ENCODE measurements at regions of chr6 and their contacts with region 1.

Region 1: DNA sequence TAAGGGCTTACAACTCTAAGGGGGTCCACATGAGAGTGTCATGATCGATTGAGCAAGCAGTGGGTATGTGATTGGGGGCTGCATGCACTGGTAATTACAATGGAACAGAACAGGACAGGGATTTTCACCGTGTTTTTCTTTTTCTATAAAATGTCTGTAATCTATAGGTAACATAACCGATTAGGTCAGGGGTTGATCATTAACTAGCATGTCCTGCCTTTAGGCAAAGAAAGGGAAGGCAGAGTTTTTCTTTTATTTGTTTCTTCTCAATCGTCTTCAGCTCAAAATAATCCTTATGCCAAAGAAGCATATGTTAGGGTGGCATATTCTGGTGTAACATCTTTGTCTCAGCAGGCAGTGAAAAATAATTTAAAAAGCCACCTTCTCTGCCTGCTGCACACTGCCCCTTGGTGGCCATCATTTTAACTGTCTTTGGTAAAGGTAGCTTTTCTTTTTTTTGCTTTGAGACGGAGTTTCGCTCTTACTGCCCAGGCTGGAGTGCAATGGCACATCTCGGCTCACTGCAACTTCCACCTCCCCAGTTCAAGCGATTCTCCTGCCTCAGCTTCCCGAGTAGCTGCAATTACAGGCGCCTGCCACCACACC is 9.7 kb upstream of the CEP43 start:
- DNase-seq: no peak
- ATAC-seq: peak; percentile 87
- H3K4me3 ChIP-seq: no peak overlapping the region
- H3K27ac ChIP-seq: no peak overlapping the region
- H3K4me1 ChIP-seq: no peaks in the 10 kb centered on the region; the same call in 1 of the 2 replicates
- H3K27me3 ChIP-seq: no peaks in the 10 kb centered on the region
- CTCF ChIP-seq: peak; percentile 42 to 54 (median 44); a peak in 5 of 6 replicates
- EP300 ChIP-seq: no peak
- POLR2A ChIP-seq: no peak
- RAD21 ChIP-seq: peak; percentile 77

Region 2: DNA sequence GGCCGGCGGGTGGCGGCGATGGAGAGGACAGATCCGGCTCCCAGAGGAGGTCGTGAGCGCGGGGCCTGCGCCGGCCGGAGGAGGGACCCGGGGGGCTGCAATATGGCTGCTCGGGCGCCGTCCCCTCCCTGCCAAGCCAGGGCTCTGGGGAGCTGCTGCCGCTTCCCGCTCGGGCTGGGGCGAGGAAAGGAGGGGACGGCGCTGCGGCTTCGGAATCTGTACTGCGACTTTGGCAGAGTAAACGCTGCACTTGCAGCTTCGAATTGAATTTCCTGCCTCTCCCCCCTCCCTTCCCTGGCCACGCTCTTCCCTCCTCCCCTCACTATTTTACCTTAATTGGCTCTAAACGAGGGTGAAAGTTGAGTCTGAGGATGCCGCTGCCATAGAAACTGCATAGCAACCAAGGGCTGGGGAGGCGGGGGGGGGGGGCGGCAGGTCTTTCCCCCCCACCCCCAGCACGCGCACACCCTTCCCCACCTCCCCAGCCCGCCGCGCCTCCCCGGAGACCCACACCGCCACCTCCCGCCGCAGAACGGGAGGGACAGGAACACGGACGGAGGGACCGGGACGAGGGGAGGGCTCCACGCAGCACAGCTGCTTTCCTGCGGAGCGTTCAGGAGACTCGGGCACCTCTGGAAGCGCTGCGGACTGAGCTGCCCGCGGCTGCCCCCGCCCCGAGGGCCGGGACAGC is 127.1 kb before region 1 on chr6:
- CTCF ChIA-PET with region 1: interaction called, 14 read pairs
- POLR2A ChIA-PET with region 1: no interaction called
- RAD21 ChIA-PET with region 1: interaction called, 6 read pairs
- SMC1A ChIA-PET with region 1: interaction called, 8 read pairs
- in situ Hi-C with region 1: no loop called
- intact Hi-C with region 1: no loop called
- DNase-seq: no peak
- ATAC-seq: peak; percentile 76
- H3K4me3 ChIP-seq: peak overlapping the region; percentile 77
- H3K27ac ChIP-seq: no peak overlapping the region
- H3K4me1 ChIP-seq: no peaks in the 10 kb centered on the region; the same call in 1 of the 2 replicates
- H3K27me3 ChIP-seq: no peaks in the 10 kb centered on the region; a peak in 1 of 4 replicates
- CTCF ChIP-seq: peak; percentile 19 to 33 (median 30); a peak in 3 of 6 replicates
- EP300 ChIP-seq: no peak
- POLR2A ChIP-seq: no peak
- RAD21 ChIP-seq: peak; percentile 51

Region 3: DNA sequence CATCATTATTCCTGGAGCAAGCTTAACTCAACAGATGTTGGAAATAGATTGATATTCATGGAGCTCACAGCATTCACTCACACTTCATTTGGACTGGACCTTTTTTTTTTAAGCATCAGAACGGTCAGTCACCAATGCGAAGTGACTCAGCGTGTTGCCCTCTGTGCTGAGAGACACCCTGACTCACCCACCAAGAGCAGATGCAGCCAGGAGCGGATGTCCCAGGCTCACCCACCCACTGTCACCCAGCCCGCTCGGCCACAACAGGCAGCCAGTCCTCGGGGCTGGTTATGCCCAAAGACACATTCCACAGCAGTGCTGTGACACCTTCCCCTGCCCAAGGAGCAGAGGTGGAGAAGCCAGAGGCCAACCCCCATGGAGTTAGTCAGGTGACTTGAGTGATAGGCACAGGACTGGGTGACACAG is 48.9 kb before region 1 on chr6:
- CTCF ChIA-PET with region 1: interaction called, 15 read pairs
- POLR2A ChIA-PET with region 1: no interaction called
- RAD21 ChIA-PET with region 1: interaction called, 5 read pairs
- SMC1A ChIA-PET with region 1: interaction called, 11 read pairs
- in situ Hi-C with region 1: no loop called
- intact Hi-C with region 1: no loop called
- DNase-seq: no peak
- ATAC-seq: no peak
- H3K4me3 ChIP-seq: no peak overlapping the region
- H3K27ac ChIP-seq: no peak overlapping the region
- H3K4me1 ChIP-seq: no peaks in the 10 kb centered on the region
- H3K27me3 ChIP-seq: no peaks in the 10 kb centered on the region
- CTCF ChIP-seq: no peak
- EP300 ChIP-seq: no peak
- POLR2A ChIP-seq: no peak
- RAD21 ChIP-seq: no peak

Region 4: GRCh38 chr6:166969390-166970002 is 20.0 kb before region 1 on chr6:
- CTCF ChIA-PET with region 1: interaction called, 13 read pairs
- POLR2A ChIA-PET with region 1: no interaction called
- RAD21 ChIA-PET with region 1: interaction called, 3 read pairs
- SMC1A ChIA-PET with region 1: interaction called, 10 read pairs
- in situ Hi-C with region 1: no loop called
- intact Hi-C with region 1: no loop called
- DNase-seq: no peak
- ATAC-seq: no peak
- H3K4me3 ChIP-seq: no peak overlapping the region
- H3K27ac ChIP-seq: no peak overlapping the region
- H3K4me1 ChIP-seq: peaks cover 3% of the 10 kb centered on the region; the same call in 1 of the 2 replicates
- H3K27me3 ChIP-seq: no peaks in the 10 kb centered on the region
- CTCF ChIP-seq: no peak
- EP300 ChIP-seq: no peak
- POLR2A ChIP-seq: no peak
- RAD21 ChIP-seq: no peak

Region 5: DNA sequence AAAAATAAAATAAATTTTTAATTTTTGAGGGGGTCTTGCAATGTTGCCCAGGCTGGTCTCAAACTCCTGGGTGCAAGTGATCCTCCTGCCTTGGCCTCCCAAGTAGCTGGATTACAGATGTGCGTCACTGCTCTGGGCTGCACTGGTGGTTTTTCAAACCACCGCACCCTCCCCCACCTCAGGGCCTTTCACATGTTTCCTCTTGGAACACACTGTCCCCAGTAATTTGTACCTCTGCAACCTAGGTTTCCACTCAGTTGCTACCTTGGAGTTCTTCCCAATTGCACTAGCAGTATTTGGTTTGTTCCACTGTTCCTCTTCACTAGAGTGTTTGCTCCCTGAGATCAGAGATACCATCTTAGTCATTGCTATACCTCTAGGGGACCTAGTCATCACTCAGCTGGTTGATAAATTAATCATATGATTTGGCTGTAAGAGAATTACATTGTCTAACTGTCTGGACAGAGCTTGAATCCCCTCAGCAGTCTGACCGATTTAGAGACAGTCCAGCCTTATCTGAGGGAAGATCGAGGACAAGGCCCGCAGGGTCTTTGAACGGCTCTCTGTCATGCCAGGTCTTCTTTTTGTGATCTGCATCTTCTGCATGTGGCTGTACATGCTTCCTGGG is 41.7 kb after region 1 on chr6:
- CTCF ChIA-PET with region 1: no interaction called
- POLR2A ChIA-PET with region 1: no interaction called
- RAD21 ChIA-PET with region 1: no interaction called
- SMC1A ChIA-PET with region 1: no interaction called
- in situ Hi-C with region 1: no loop called
- intact Hi-C with region 1: no loop called
- DNase-seq: no peak
- ATAC-seq: no peak; the same call in 2 of the 3 replicates
- H3K4me3 ChIP-seq: no peak overlapping the region
- H3K27ac ChIP-seq: no peak overlapping the region
- H3K4me1 ChIP-seq: no peaks in the 10 kb centered on the region
- H3K27me3 ChIP-seq: no peaks in the 10 kb centered on the region
- CTCF ChIP-seq: no peak
- EP300 ChIP-seq: no peak
- POLR2A ChIP-seq: no peak
- RAD21 ChIP-seq: no peak

Region 6: DNA sequence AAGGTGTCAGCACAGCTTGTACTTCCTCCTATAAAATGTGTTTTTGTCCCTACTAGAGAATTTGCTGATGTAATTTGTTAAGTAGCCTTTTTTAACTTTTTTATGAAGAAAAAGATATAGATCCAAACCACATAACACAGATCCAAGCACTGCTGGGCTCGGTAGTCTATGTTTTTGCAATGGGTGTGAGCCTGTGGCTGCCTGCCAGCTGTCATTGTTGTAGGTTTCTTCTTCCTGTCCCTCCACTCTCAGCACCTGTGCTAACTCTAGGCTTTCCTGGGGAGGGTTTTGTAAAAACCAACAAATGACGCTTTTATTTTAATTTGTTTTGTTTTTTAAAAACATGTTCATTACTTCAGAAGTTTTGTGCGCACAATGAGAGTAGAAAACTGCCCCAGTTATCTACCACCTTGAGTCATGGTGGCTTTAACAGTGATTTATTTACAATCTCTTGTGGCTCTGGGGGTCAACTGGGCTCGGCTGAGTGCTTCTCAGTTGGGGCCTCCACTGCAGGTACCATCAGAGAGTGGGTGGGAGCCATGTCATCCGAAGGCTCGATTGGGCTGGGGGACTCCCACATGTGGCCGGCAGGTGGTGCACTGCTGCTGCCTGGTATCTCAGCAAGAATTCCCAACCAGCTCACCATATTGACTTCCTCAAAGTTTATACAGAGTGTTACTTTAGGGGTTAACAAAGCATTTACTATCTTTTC is 130.3 kb after region 1 on chr6:
- CTCF ChIA-PET with region 1: interaction called, 10 read pairs
- POLR2A ChIA-PET with region 1: interaction called, 3 read pairs
- RAD21 ChIA-PET with region 1: interaction called, 8 read pairs
- SMC1A ChIA-PET with region 1: interaction called, 11 read pairs
- in situ Hi-C with region 1: no loop called
- intact Hi-C with region 1: no loop called
- DNase-seq: no peak
- ATAC-seq: no peak
- H3K4me3 ChIP-seq: no peak overlapping the region
- H3K27ac ChIP-seq: peak overlapping the region; percentile 66; the same call in 1 of the 2 replicates
- H3K4me1 ChIP-seq: peaks cover 69% of the 10 kb centered on the region
- H3K27me3 ChIP-seq: no peaks in the 10 kb centered on the region
- CTCF ChIP-seq: peak; percentile 18 to 58 (median 56); a peak in 5 of 6 replicates
- EP300 ChIP-seq: no peak
- POLR2A ChIP-seq: no peak
- RAD21 ChIP-seq: peak; percentile 30

Region 7: GRCh38 chr6:167153521-167153959 is 164.0 kb after region 1 on chr6:
- CTCF ChIA-PET with region 1: interaction called, 17 read pairs
- POLR2A ChIA-PET with region 1: no interaction called
- RAD21 ChIA-PET with region 1: interaction called, 8 read pairs
- SMC1A ChIA-PET with region 1: interaction called, 3 read pairs
- in situ Hi-C with region 1: no loop called
- intact Hi-C with region 1: no loop called
- DNase-seq: peak; percentile 78
- ATAC-seq: peak; percentile 71
- H3K4me3 ChIP-seq: peak overlapping the region; percentile 54
- H3K27ac ChIP-seq: peak overlapping the region; percentile 70
- H3K4me1 ChIP-seq: peaks cover 30% of the 10 kb centered on the region
- H3K27me3 ChIP-seq: no peaks in the 10 kb centered on the region; a peak in 1 of 4 replicates
- CTCF ChIP-seq: no peak
- EP300 ChIP-seq: peak; percentile 81; a peak in 3 of 4 replicates
- POLR2A ChIP-seq: no peak
- RAD21 ChIP-seq: no peak